Dorsolateral prefrontal cortex (tissue), 120 donors: ENCODE measurements at regions of chr2 and their contacts with region 1.

Region 1: DNA sequence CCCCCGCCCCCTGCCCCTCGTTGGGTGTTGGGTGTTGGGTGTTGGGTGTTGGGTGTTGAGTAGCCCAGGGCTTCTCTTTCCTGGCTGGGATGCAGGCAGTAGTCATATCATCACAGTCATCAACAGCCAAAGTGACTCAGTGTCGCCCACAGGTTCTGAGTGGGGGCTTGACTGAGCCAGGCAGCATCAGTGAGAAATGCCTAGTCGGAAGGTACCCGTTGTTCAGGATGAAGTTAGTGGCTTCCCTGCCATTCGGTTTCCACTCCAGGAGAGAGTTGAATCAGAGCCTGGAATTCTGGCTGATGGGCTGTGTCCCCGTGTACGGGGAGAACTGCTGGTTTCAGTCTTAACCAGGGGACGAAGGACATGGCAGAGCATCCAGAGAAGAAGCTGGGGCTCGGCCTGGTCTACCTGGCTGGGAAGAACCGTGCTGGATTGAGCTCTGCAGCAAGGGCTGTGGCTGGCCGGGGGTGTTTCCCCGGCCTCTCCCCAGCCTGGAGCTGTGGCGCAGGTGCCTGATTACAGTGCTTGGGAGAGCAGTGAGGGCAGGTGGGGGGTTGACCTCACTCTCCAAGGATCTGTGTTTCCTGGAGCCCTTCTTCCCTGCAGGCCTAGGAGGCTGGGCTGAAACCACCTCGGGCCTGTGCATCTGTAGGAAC is 49.4 kb downstream of the AGAP1 start:
- DNase-seq: peak in 7 of 10 donors; percentile 53 to 81 (median 63)
- H3K4me3 ChIP-seq: no peak overlapping the region
- H3K27ac ChIP-seq: peak overlapping the region in 13 of 59 donors; percentile 14 to 72 (median 46)
- H3K27me3 ChIP-seq: no peaks in the 10 kb centered on the region
- CTCF ChIP-seq: no peak

Region 2: GRCh38 chr2:235230821-235231601 is 312.2 kb before region 1 on chr2:
- intact Hi-C with region 1: no loop called
- DNase-seq: no peak
- H3K4me3 ChIP-seq: no peak overlapping the region
- H3K27ac ChIP-seq: no peak overlapping the region
- H3K27me3 ChIP-seq: peaks cover 0 to 14% (median 0%) of the 10 kb centered on the region in 45 donors
- CTCF ChIP-seq: no peak

Region 3: DNA sequence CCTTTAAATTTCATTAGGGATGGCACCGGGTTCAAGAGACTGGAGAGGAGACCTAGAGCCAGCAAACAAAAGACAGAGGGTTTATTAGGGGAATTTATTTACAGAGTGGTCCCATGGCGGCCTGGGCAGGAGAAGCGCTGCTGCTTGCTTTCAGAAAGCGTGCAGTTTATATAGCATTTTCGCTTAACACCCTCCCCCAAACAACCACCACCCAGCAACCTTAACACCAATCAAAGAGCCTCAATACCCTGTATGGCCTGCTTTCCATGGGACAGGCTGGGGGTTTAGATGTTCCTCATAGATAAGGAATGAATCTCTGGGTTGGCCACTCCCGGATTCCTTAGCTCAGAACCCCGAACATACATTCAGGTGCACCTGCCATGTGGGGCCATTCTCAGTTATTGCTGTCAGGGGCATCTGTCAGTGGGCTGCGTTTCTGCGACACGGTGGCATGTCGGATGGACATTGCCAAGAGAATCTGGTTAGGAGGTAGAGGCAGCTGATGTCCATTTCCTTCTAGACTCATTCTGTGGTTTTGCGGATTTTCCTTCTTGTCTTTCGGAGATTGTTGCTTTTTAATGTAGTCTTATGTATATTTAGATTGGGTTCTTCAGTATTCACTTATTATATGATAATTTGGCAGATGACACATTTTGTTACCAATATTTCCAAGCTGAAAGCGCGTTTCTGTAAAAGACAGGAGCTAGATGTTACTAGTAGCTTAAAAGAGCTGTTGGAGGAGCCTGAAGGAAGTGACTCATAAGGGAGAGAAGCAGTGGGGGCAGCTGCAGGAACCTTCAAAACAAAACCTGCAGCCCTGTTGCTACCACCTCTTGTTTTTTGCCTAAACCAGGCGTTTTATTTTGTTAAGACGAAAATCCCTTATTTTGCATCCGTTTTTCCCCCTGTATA is 42.2 kb before region 1 on chr2:
- intact Hi-C with region 1: loop called (anchors 5 kb)
- DNase-seq: no peak
- H3K4me3 ChIP-seq: peak overlapping the region in 45 of 59 donors; percentile 5 to 53 (median 26)
- H3K27ac ChIP-seq: peak overlapping the region in 24 of 59 donors; percentile 5 to 77 (median 46)
- H3K27me3 ChIP-seq: no peaks in the 10 kb centered on the region
- CTCF ChIP-seq: no peak

Region 4: DNA sequence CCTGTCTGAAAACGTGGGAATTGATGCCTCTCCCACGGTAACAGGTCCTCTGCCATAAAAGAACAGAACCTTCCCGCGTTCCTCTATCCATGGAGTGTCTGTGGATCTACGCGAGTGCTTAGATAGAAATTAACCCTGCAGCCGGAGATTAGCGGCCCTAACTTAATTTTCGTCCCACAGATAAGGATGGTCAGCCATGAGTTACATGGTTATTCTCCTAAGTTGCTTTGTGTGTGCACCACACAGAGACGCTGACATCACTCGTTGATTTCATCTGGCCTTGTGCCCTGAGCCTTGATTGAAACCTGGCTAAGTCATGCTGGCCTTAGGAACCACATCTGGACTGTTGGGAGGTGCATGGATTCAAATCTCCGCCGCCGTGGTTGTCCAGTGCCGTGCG is 492.8 kb after region 1 on chr2:
- intact Hi-C with region 1: loop called in 1 of 2 experiments (anchors 5 kb)
- DNase-seq: no peak
- H3K4me3 ChIP-seq: no peak overlapping the region
- H3K27ac ChIP-seq: peak overlapping the region in 3 of 59 donors; percentile 1 to 61 (median 17)
- H3K27me3 ChIP-seq: no peaks in the 10 kb centered on the region
- CTCF ChIP-seq: no peak